Esophagus muscularis mucosa (tissue), 4 donors: ENCODE measurements at regions of chr9 and their contacts with region 1.

Region 1: GRCh38 chr9:71721855-71722254 is 46.5 kb downstream of the CEMIP2 start:
- DNase-seq: no peak
- H3K4me3 ChIP-seq: no peak overlapping the region
- H3K27ac ChIP-seq: no peak overlapping the region
- H3K4me1 ChIP-seq: peaks cover 0 to 19% (median 13%) of the 10 kb centered on the region in 4 donors
- H3K27me3 ChIP-seq: no peaks in the 10 kb centered on the region
- CTCF ChIP-seq: no peak
- EP300 ChIP-seq: no peak
- POLR2A ChIP-seq: no peak

Region 2: GRCh38 chr9:71768388-71769174 is 46.7 kb after region 1 on chr9 and contains the start of gene CEMIP2:
- intact Hi-C with region 1: loop called (anchors 5 kb)
- DNase-seq: peak; percentile 96
- H3K4me3 ChIP-seq: peak within 1 kb of the TSS; percentile 66 to 83 (median 76)
- H3K27ac ChIP-seq: peak within 1 kb of the TSS; percentile 94 to 98 (median 96)
- H3K4me1 ChIP-seq: peaks cover 19 to 52% (median 51%) of the 10 kb centered on the region in 4 donors
- H3K27me3 ChIP-seq: no peaks in the 10 kb centered on the region
- CTCF ChIP-seq: peak; percentile 37 to 56 (median 51)
- EP300 ChIP-seq: no peak
- POLR2A ChIP-seq: peak; percentile 44
- total RNA-seq, gene CEMIP2: 18.5 to 144 (median 26.8) TPM